Naive thymus-derived CD4-positive, alpha-beta T cell (primary cell): ENCODE measurements at regions of chr16 and their contacts with region 1.

Region 1: DNA sequence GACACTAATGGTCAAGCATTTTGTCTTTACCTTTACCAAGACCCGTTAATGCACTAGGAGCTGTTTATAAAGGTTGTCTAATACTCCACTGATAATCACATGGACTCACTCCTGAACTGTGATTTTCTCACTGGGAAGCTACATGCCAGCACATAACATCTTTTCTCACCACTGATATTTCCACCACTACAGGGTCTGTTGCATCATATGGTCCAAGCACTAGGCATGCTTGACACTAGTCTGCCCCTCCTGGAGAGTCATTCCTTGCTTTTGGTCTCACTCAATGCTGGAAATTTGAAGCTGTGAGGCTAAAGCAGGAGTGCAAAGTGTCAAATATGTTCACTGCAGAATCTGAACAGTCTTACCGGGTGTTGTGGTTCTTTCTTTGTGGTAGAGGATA is 1576.8 kb downstream of the CDH8 start:
- DNase-seq: no peak
- ATAC-seq: no peak
- H3K4me3 ChIP-seq: no peak overlapping the region
- H3K4me3 Mint-ChIP-seq: no peak overlapping the region
- H3K27ac ChIP-seq: no peak overlapping the region
- H3K27ac Mint-ChIP-seq: no peak overlapping the region
- H3K4me1 ChIP-seq: no peaks in the 10 kb centered on the region
- H3K4me1 Mint-ChIP-seq: no peaks in the 10 kb centered on the region
- H3K27me3 ChIP-seq: no peaks in the 10 kb centered on the region
- H3K27me3 Mint-ChIP-seq: no peaks in the 10 kb centered on the region

Region 2: GRCh38 chr16:60712144-60712543 is 252.7 kb after region 1 on chr16:
- CTCF ChIA-PET with region 1: no interaction called
- POLR2A ChIA-PET with region 1: no interaction called
- intact Hi-C with region 1: loop called in 1 of 2 experiments (anchors 5 kb)
- DNase-seq: no peak
- ATAC-seq: no peak
- H3K4me3 ChIP-seq: no peak overlapping the region
- H3K4me3 Mint-ChIP-seq: no peak overlapping the region
- H3K27ac ChIP-seq: no peak overlapping the region
- H3K27ac Mint-ChIP-seq: no peak overlapping the region
- H3K4me1 ChIP-seq: no peaks in the 10 kb centered on the region
- H3K4me1 Mint-ChIP-seq: no peaks in the 10 kb centered on the region
- H3K27me3 ChIP-seq: no peaks in the 10 kb centered on the region
- H3K27me3 Mint-ChIP-seq: no peaks in the 10 kb centered on the region